Naive thymus-derived CD4-positive, alpha-beta T cell (primary cell): ENCODE measurements at regions of chr6 and their contacts with region 1.

Region 1: GRCh38 chr6:116217069-116217468 is 36.8 kb downstream of the TSPYL4 start:
- DNase-seq: peak in 6 of 9 donors; percentile 10 to 55 (median 44)
- ATAC-seq: peak; percentile 86
- H3K4me3 ChIP-seq: no peak overlapping the region
- H3K4me3 Mint-ChIP-seq: no peak overlapping the region
- H3K27ac ChIP-seq: no peak overlapping the region
- H3K27ac Mint-ChIP-seq: peak overlapping the region in 5 of 9 donors; percentile 7 to 76 (median 44)
- H3K4me1 ChIP-seq: no peaks in the 10 kb centered on the region
- H3K4me1 Mint-ChIP-seq: peaks cover 0 to 12% (median 6%) of the 10 kb centered on the region in 7 donors
- H3K27me3 ChIP-seq: no peaks in the 10 kb centered on the region
- H3K27me3 Mint-ChIP-seq: no peaks in the 10 kb centered on the region

Region 2: GRCh38 chr6:115958958-115959357 is 258.1 kb before region 1 on chr6:
- CTCF ChIA-PET with region 1: no interaction called
- POLR2A ChIA-PET with region 1: no interaction called
- intact Hi-C with region 1: no loop called
- DNase-seq: no peak
- ATAC-seq: no peak
- H3K4me3 ChIP-seq: no peak overlapping the region
- H3K4me3 Mint-ChIP-seq: no peak overlapping the region
- H3K27ac ChIP-seq: no peak overlapping the region
- H3K27ac Mint-ChIP-seq: no peak overlapping the region
- H3K4me1 ChIP-seq: no peaks in the 10 kb centered on the region
- H3K4me1 Mint-ChIP-seq: no peaks in the 10 kb centered on the region
- H3K27me3 ChIP-seq: no peaks in the 10 kb centered on the region
- H3K27me3 Mint-ChIP-seq: peaks cover 0 to 6% (median 0%) of the 10 kb centered on the region in 5 donors

Region 3: DNA sequence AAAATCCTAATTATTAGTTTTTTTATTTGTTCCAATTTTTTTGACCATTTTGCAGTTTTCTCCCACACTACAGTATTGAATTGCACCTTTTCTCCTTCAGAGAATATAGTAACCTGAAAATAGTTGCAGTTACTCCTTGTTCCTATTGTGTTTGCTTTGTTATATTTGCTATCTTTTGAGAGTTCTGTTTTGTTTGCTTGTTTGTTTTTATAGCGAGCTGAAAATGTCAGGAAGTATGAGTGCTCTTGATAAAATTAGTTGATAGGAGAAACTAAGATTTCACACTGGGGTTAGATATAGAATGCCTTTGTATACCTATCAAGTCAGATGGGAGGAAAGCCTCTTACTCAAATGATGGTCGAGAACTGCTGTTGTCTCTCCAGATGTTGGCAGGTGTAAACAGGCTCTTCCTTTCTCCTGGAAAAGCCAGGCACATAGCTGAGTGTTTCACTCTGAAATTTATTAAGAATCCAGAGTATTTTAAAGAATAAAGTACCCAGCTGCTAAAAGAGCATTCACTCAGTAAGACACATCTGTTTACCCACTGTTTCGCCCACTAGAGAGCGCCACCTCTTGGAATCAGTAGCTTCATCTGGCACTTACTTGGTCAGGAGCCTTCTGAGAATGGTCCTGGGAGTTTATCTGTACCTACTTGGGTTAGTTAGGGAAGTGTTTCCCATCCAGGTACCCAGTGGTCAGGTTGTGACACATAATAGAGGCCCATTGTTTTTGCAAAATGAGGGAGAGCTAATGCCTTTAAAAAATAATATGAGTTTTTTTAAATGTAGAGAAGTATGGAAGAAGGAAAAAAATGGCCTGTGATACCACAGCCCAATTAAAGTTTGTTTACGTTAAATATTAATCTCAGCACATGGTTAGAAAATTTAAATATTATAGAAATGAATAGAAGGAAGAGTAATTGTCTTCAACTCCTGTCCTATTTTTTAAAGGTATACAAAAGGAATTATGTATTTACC is 105.2 kb before region 1 on chr6:
- CTCF ChIA-PET with region 1: no interaction called
- POLR2A ChIA-PET with region 1: no interaction called
- intact Hi-C with region 1: loop called in 1 of 2 experiments (anchors 10 kb)
- DNase-seq: no peak
- ATAC-seq: peak; percentile 40
- H3K4me3 ChIP-seq: no peak overlapping the region
- H3K4me3 Mint-ChIP-seq: no peak overlapping the region
- H3K27ac ChIP-seq: no peak overlapping the region
- H3K27ac Mint-ChIP-seq: no peak overlapping the region
- H3K4me1 ChIP-seq: no peaks in the 10 kb centered on the region
- H3K4me1 Mint-ChIP-seq: peaks cover 0 to 24% (median 5%) of the 10 kb centered on the region in 7 donors
- H3K27me3 ChIP-seq: no peaks in the 10 kb centered on the region
- H3K27me3 Mint-ChIP-seq: no peaks in the 10 kb centered on the region

Region 4: GRCh38 chr6:116200619-116201249 is 16.3 kb before region 1 on chr6:
- CTCF ChIA-PET with region 1: no interaction called
- POLR2A ChIA-PET with region 1: no interaction called
- intact Hi-C with region 1: no loop called
- DNase-seq: no peak
- ATAC-seq: no peak
- H3K4me3 ChIP-seq: no peak overlapping the region
- H3K4me3 Mint-ChIP-seq: no peak overlapping the region
- H3K27ac ChIP-seq: no peak overlapping the region
- H3K27ac Mint-ChIP-seq: no peak overlapping the region
- H3K4me1 ChIP-seq: no peaks in the 10 kb centered on the region
- H3K4me1 Mint-ChIP-seq: peaks cover 0 to 8% (median 2%) of the 10 kb centered on the region in 7 donors
- H3K27me3 ChIP-seq: no peaks in the 10 kb centered on the region
- H3K27me3 Mint-ChIP-seq: no peaks in the 10 kb centered on the region

Region 5: DNA sequence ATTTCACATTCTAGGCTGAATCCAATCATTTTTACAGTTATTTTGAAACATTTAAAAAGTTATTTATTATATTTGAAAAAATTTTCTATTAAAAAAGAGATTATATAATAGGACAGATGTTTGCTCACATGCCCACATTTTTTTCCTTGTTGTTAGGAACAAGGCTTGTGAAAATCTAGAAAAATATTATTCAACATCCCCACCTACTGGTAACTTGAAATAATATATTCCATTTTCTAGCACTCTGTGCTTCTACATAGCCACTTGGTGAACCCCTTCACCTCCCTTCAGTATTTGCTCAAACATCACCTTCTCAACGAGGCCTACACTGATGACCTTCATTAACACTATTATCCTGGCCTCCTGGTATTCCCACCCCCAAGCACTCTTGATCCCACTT is 630.2 kb after region 1 on chr6:
- CTCF ChIA-PET with region 1: no interaction called
- POLR2A ChIA-PET with region 1: no interaction called
- intact Hi-C with region 1: loop called in 1 of 2 experiments (anchors 10 kb)
- DNase-seq: no peak
- ATAC-seq: no peak
- H3K4me3 ChIP-seq: no peak overlapping the region
- H3K4me3 Mint-ChIP-seq: no peak overlapping the region
- H3K27ac ChIP-seq: no peak overlapping the region
- H3K27ac Mint-ChIP-seq: no peak overlapping the region
- H3K4me1 ChIP-seq: no peaks in the 10 kb centered on the region
- H3K4me1 Mint-ChIP-seq: no peaks in the 10 kb centered on the region
- H3K27me3 ChIP-seq: no peaks in the 10 kb centered on the region
- H3K27me3 Mint-ChIP-seq: peaks cover 0 to 27% (median 7%) of the 10 kb centered on the region in 5 donors